ENCODE measurements at regions of chrX and their contacts with region 1.

Region 1: DNA sequence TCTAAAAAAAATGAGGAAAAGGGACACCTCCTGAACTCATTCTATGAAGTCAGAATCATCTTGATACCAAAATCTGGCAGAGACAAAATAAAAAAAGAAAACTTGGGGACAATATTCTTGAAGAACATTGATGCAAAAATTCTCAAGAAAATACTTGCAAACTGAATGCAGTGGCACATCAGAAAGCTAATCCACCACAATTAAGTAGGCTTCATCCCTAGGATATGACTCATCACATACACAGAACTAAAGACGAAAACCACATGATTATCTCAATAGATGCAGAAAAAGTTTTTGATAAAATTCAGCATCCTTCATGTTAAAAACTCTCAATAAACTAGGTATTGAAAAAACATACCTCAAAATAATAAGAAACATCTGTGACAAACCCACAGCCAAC is 98.3 kb downstream of the FAM47B start:
- DNase-seq: peak; percentile 50
- ATAC-seq: peak; percentile 62
- H3K4me3 ChIP-seq: no peak overlapping the region
- H3K27ac ChIP-seq: no peak overlapping the region
- H3K4me1 ChIP-seq: no peaks in the 10 kb centered on the region
- H3K27me3 ChIP-seq: no peaks in the 10 kb centered on the region
- CTCF ChIP-seq: no peak
- POLR2A ChIP-seq: no peak
- RAD21 ChIP-seq: no peak

Region 2: GRCh38 chrX:35392232-35392631 is 351.4 kb after region 1 on chrX:
- CTCF ChIA-PET with region 1: no interaction called
- POLR2A ChIA-PET with region 1: no interaction called
- dilution Hi-C with region 1: no loop called
- in situ Hi-C with region 1: no loop called
- intact Hi-C with region 1: no loop called
- DNase-seq: no peak
- ATAC-seq: no peak
- H3K4me3 ChIP-seq: no peak overlapping the region
- H3K27ac ChIP-seq: no peak overlapping the region
- H3K4me1 ChIP-seq: no peaks in the 10 kb centered on the region
- H3K27me3 ChIP-seq: no peaks in the 10 kb centered on the region
- CTCF ChIP-seq: no peak
- POLR2A ChIP-seq: no peak
- RAD21 ChIP-seq: no peak

Region 3: GRCh38 chrX:35880601-35881000 is 839.7 kb after region 1 on chrX:
- CTCF ChIA-PET with region 1: no interaction called
- POLR2A ChIA-PET with region 1: no interaction called
- dilution Hi-C with region 1: no loop called
- in situ Hi-C with region 1: no loop called
- intact Hi-C with region 1: no loop called
- DNase-seq: no peak
- ATAC-seq: no peak
- H3K4me3 ChIP-seq: no peak overlapping the region
- H3K27ac ChIP-seq: no peak overlapping the region
- H3K4me1 ChIP-seq: no peaks in the 10 kb centered on the region
- H3K27me3 ChIP-seq: no peaks in the 10 kb centered on the region
- CTCF ChIP-seq: no peak
- POLR2A ChIP-seq: no peak
- RAD21 ChIP-seq: no peak

Region 4: GRCh38 chrX:36908801-36909676 is 1868.2 kb after region 1 on chrX:
- CTCF ChIA-PET with region 1: no interaction called
- POLR2A ChIA-PET with region 1: no interaction called
- dilution Hi-C with region 1: no loop called
- in situ Hi-C with region 1: no loop called
- intact Hi-C with region 1: loop called (anchors 10 kb)
- DNase-seq: peak; percentile 29
- ATAC-seq: peak; percentile 83
- H3K4me3 ChIP-seq: no peak overlapping the region
- H3K27ac ChIP-seq: no peak overlapping the region
- H3K4me1 ChIP-seq: no peaks in the 10 kb centered on the region
- H3K27me3 ChIP-seq: no peaks in the 10 kb centered on the region
- CTCF ChIP-seq: peak; percentile 57
- POLR2A ChIP-seq: no peak
- RAD21 ChIP-seq: 0 out of 2 replicates have a peak, but pooled peaks have one; percentile 26

Measured in IMR-90 (cell line).